ENCODE measurements at regions of chr1 and their contacts with region 1.

Region 1: DNA sequence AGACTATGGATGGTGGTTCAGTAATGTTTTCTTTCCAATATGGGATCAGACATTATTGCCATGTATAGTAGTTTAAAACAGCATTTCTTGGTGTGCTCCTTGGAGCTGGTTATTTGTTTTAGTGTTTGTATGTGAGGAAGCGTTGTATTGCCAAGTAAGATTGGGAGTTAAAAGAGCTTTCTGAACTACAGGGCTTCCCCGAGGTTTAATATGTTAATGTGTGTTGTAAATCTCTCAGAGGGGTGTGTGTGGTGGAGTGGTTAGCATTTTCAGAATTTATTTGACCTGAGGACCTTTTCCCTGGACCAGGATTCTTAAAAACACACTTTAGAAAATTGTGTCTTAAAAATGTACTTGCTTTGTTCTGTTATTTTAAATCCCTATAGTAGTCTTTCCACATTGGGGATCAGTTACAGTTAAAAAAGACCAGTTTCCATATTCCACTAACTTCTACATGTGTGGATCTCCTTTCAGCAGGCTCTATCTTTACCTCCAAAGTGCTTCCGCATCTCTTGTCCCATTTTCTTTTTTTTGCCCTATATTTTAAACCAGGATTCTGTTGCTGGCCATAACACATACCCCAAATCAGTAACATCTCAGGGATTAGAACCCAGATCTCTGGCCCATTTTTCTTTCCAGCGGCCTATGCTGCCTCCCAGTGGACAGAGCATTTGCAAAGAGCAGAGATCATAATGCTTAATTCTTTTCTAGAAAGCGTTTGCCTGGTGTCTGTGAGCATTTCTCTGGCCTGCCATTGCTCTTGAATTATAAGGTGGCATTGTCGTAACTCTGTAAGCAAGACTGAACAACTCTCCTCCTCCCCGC is 58.6 kb downstream of the PBX1 start:
- DNase-seq: peak; percentile 19
- ATAC-seq: peak; percentile 75
- H3K4me3 ChIP-seq: no peak overlapping the region
- H3K27ac ChIP-seq: no peak overlapping the region
- H3K4me1 ChIP-seq: peaks cover 24 to 30% of the 10 kb centered on the region in 2 experiments
- H3K27me3 ChIP-seq: no peaks in the 10 kb centered on the region
- CTCF ChIP-seq: peak; percentile 69 to 82 (median 72); a peak in 5 of 6 replicates
- POLR2A ChIP-seq: no peak
- RAD21 ChIP-seq: peak; percentile 92

Region 2: GRCh38 chr1:163361123-163361934 is 1256.3 kb before region 1 on chr1:
- CTCF ChIA-PET with region 1: interaction called, 4 read pairs
- POLR2A ChIA-PET with region 1: no interaction called
- RAD21 ChIA-PET with region 1: no interaction called
- intact Hi-C with region 1: loop called (anchors 5 kb)
- DNase-seq: peak; percentile 15
- ATAC-seq: peak; percentile 88
- H3K4me3 ChIP-seq: no peak overlapping the region
- H3K27ac ChIP-seq: no peak overlapping the region
- H3K4me1 ChIP-seq: peaks cover 0 to 6% of the 10 kb centered on the region in 2 experiments; a peak in 1 of 4 replicates
- H3K27me3 ChIP-seq: 0 out of 2 replicates have a peak, but pooled peaks cover 5% of the 10 kb centered on the region
- CTCF ChIP-seq: peak; percentile 44 to 65 (median 50); a peak in 5 of 6 replicates
- POLR2A ChIP-seq: no peak
- RAD21 ChIP-seq: peak; percentile 74

Region 3: GRCh38 chr1:163528710-163529348 is 1088.8 kb before region 1 on chr1:
- CTCF ChIA-PET with region 1: no interaction called
- POLR2A ChIA-PET with region 1: no interaction called
- RAD21 ChIA-PET with region 1: no interaction called
- intact Hi-C with region 1: loop called (anchors 2 kb)
- DNase-seq: peak; percentile 13
- ATAC-seq: peak; percentile 68
- H3K4me3 ChIP-seq: no peak overlapping the region
- H3K27ac ChIP-seq: no peak overlapping the region
- H3K4me1 ChIP-seq: no peaks in the 10 kb centered on the region
- H3K27me3 ChIP-seq: no peaks in the 10 kb centered on the region
- CTCF ChIP-seq: peak; percentile 29 to 56 (median 56); a peak in 5 of 6 replicates
- POLR2A ChIP-seq: no peak
- RAD21 ChIP-seq: peak; percentile 47

Region 4: GRCh38 chr1:164163289-164163864 is 454.2 kb before region 1 on chr1:
- CTCF ChIA-PET with region 1: interaction called, 6 read pairs
- POLR2A ChIA-PET with region 1: no interaction called
- RAD21 ChIA-PET with region 1: interaction called in 1 of 2 experiments, 4 read pairs
- intact Hi-C with region 1: loop called (anchors 1 kb)
- DNase-seq: no peak
- ATAC-seq: no peak
- H3K4me3 ChIP-seq: no peak overlapping the region
- H3K27ac ChIP-seq: no peak overlapping the region
- H3K4me1 ChIP-seq: no peaks in the 10 kb centered on the region
- H3K27me3 ChIP-seq: no peaks in the 10 kb centered on the region
- CTCF ChIP-seq: no peak
- POLR2A ChIP-seq: no peak
- RAD21 ChIP-seq: no peak

Region 5: GRCh38 chr1:164518692-164519332 is 98.8 kb before region 1 on chr1:
- CTCF ChIA-PET with region 1: no interaction called
- POLR2A ChIA-PET with region 1: no interaction called
- RAD21 ChIA-PET with region 1: no interaction called
- intact Hi-C with region 1: loop called (anchors 5 kb)
- DNase-seq: no peak
- ATAC-seq: peak; percentile 20; the same call in 1 of the 2 replicates
- H3K4me3 ChIP-seq: no peak overlapping the region
- H3K27ac ChIP-seq: no peak overlapping the region
- H3K4me1 ChIP-seq: no peaks in the 10 kb centered on the region
- H3K27me3 ChIP-seq: no peaks in the 10 kb centered on the region
- CTCF ChIP-seq: peak in 1 of 3 experiments; percentile 9; a peak in 1 of 6 replicates
- POLR2A ChIP-seq: no peak
- RAD21 ChIP-seq: 0 out of 2 replicates have a peak, but pooled peaks have one; percentile 26